PC-9 (cell line): ENCODE measurements at regions of chr1 and their contacts with region 1.

Region 1: DNA sequence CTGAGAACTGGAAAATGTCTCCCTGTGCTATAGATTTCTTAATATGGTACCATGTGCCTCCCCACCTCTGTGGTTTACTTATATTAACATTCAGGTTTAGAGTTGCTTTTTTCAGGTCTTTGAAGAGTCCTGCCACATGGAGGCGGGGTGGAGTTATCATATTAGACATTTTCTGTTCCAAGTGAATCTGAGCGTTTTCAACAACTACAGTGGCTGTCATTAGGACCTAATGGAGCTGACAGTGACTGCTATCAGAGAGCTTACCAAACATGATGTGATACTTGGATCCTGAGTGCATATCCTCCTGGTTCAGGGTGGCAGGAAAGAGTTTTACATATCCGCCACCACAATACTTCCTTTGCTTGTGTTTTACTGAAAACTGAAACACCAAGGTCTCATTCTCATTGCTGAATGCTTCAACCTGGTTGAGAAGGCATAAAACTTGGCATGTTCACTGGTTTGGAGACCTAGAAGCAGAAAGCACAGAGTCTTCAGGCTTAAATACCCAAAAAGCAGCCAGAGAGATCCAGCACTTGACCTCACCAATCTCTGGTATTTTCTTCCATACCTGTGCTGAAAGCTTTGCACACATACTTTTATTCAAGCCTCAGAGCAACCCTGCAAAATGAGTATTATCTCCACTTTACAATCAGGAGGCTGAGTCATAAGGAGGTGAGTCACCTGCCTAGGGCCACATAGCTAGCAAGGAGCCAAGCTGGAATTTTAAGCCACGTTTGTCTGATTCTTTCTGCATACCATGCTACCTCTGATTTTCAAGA is 47.4 kb upstream of the OSBPL9 start:
- DNase-seq: peak; percentile 87 to 98
- H3K4me3 ChIP-seq: peak overlapping the region; percentile 22; the same call in 1 of the 2 replicates
- H3K27ac ChIP-seq: peak overlapping the region; percentile 97
- H3K4me1 ChIP-seq: peaks cover 80% of the 10 kb centered on the region
- H3K27me3 ChIP-seq: no peaks in the 10 kb centered on the region
- CTCF ChIP-seq: peak; percentile 52

Region 2: DNA sequence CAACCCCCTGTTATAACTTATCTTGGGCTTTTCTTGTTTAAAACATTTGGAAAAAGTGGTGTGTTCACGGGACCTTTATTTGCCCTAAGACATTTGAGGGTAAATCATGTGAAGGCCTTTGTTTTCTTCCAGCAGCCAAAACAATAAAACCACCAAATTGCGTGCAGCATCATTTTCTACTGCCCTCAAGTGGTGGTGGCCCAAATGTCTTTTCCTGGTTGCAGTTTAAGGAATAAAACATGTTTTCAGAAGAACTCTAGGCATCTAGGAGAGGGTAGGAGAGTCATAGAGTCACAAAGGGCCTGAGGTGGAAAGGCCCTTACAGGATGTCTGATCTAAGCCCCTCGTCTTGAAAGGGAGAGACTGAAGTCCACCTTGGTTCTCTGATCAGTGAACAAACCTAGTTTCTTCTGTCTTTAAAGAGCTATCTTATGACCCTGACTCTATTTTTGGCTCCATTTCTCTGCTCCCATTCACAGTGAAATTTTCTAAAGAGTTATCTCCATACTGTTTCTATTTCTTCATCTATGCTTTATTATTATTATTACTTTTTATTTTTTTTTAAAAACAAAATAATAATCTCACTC is 34.4 kb before region 1 on chr1:
- CTCF ChIA-PET with region 1: no interaction called
- POLR2A ChIA-PET with region 1: no interaction called
- intact Hi-C with region 1: loop called (anchors 2 kb)
- DNase-seq: peak; percentile 47 to 54
- H3K4me3 ChIP-seq: no peak overlapping the region
- H3K27ac ChIP-seq: no peak overlapping the region
- H3K4me1 ChIP-seq: peaks cover 12% of the 10 kb centered on the region
- H3K27me3 ChIP-seq: no peaks in the 10 kb centered on the region
- CTCF ChIP-seq: peak; percentile 73

Region 3: GRCh38 chr1:51622455-51622913 is 53.0 kb after region 1 on chr1:
- CTCF ChIA-PET with region 1: no interaction called
- POLR2A ChIA-PET with region 1: interaction called, 4 read pairs
- intact Hi-C with region 1: loop called (anchors 1 kb)
- DNase-seq: peak; percentile 87 to 98
- H3K4me3 ChIP-seq: peak overlapping the region; percentile 33; the same call in 1 of the 2 replicates
- H3K27ac ChIP-seq: peak overlapping the region; percentile 96
- H3K4me1 ChIP-seq: peaks cover 63% of the 10 kb centered on the region
- H3K27me3 ChIP-seq: no peaks in the 10 kb centered on the region
- CTCF ChIP-seq: no peak

Region 4: DNA sequence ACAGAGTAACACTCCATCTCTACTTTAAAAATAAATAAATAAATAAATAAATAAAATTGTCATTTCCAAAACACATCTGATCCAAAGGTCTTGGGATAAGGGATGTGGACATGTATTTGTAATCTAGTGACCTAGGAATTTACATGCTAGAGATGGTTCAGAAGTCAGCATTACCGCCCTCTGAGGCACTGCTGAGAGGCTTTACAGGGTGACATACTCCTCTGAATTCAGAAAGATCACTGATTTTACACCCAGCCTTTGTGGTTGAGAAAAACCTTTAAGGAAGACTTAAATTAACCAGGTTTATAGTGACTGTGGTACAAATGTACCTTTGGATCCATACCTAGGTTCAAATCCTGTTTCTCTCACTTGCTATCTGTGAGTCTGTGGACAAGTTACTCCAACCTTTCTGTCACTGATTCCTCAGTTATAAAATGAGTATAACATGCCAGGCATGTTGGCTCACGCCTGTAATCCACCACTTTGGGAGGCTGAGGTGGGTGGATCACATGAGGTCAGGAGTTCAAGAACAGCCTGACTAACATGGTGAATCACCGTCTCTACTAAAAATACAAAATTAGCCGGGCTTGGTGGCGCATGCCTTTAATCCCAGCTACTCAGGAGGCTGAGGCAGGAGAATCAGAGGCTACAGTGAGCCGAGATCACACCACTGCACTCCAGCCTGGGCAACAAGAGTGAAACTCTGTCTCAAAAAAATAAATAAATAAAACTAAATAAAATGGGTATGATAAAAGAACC is 67.5 kb after region 1 on chr1:
- CTCF ChIA-PET with region 1: no interaction called
- POLR2A ChIA-PET with region 1: no interaction called
- intact Hi-C with region 1: no loop called
- DNase-seq: peak; percentile 65 to 79
- H3K4me3 ChIP-seq: no peak overlapping the region
- H3K27ac ChIP-seq: peak overlapping the region; percentile 75
- H3K4me1 ChIP-seq: peaks cover 54% of the 10 kb centered on the region
- H3K27me3 ChIP-seq: no peaks in the 10 kb centered on the region
- CTCF ChIP-seq: no peak

Region 5: DNA sequence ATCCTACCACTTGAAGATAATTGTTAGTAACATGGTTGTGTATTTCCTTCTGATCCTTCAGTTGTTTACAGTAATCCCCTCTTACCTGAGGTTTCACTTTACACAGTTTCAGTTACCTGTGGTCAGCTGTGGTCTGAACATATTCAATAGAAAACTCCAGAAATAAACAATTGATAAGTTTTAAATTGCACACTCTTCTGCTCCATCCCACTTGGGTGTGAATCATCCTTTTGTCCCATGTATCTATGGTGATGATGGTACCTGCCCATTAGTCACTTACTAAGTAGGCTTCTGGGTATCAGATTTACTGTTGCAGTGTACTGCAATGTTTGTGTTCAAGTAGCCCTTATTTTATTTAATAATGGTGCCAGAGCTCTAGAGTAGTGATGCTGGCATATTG is 110.0 kb after region 1 on chr1:
- CTCF ChIA-PET with region 1: no interaction called
- POLR2A ChIA-PET with region 1: interaction called, 11 read pairs
- intact Hi-C with region 1: no loop called
- DNase-seq: peak in 1 of 2 experiments; percentile 53
- H3K4me3 ChIP-seq: no peak overlapping the region
- H3K27ac ChIP-seq: no peak overlapping the region
- H3K4me1 ChIP-seq: no peaks in the 10 kb centered on the region
- H3K27me3 ChIP-seq: no peaks in the 10 kb centered on the region
- CTCF ChIP-seq: no peak

Region 6: DNA sequence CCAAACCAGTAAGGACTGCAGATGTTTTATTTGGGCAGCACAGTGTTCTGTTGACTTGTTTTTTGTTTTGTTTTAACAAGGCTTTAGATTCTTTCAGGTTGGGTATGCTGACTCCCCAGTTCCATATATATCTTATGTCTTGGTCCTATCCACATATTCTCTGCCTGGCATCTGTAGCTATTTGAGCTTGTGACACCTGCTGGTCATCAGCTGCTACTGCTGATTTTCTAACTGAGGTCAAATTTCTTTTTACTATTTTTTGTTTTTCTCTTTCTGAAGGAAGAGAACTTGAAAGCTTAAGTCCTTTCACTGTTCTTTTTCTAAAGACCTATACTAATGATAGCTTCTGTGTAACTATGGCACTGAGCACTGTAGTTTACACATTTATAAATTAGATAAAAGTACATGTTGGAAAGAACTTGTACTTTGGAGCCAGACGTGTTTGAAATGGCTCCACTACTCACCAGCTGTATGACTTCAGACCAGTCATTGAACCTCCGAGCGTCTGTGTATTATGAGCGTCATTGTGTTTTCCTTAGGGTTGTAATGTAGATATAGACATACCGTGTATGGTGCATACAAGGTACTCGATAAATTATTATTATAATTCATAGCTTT is 199.6 kb after region 1 on chr1:
- CTCF ChIA-PET with region 1: interaction called, 3 read pairs
- POLR2A ChIA-PET with region 1: no interaction called
- intact Hi-C with region 1: loop called (anchors 2 kb)
- DNase-seq: peak; percentile 33 to 49
- H3K4me3 ChIP-seq: no peak overlapping the region
- H3K27ac ChIP-seq: no peak overlapping the region
- H3K4me1 ChIP-seq: no peaks in the 10 kb centered on the region
- H3K27me3 ChIP-seq: no peaks in the 10 kb centered on the region
- CTCF ChIP-seq: peak; percentile 92